ENCODE measurements at regions of chr2 and their contacts with region 1.

Region 1: DNA sequence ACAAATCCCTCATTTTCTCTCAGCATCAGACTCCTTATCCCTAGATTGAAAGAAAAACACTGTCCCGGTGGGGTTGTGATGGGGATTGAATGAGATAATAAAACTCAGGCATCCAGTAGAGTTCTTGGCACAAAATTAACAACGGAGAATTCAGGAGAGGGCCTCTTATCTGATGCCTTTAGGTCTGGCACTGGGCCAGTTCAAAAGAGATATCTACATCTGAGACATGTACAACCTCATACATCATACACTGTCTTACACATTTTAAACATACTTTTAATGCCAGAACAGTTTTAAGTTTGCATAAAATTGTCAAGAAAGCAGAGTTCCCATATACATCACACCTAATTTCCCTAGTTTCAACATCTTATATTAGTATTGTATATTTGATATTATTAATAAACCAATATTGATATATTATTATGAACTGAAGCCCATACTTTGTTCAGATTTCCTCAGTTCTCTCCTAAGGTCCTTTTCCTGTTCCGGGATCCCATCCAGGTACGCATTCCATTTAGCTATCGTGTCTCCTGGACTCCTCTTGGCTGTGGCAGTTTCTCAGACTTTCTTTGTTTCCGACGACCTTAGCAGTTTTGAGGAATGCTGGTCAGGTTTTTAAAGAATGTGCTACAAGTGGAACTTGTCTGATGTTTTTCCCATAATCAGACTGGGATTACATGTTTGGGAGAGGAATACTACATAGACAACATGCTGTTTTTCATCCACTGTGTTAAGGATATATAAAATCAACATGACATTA is 27.8 kb downstream of the NXPH2 start:
- DNase-seq: no peak
- ATAC-seq: no peak
- H3K4me3 ChIP-seq: no peak overlapping the region
- H3K27ac ChIP-seq: no peak overlapping the region
- H3K4me1 ChIP-seq: no peaks in the 10 kb centered on the region
- H3K27me3 ChIP-seq: no peaks in the 10 kb centered on the region
- CTCF ChIP-seq: no peak

Region 2: GRCh38 chr2:138390316-138390945 is 361.9 kb before region 1 on chr2:
- intact Hi-C with region 1: no loop called
- DNase-seq: no peak
- ATAC-seq: no peak
- H3K4me3 ChIP-seq: no peak overlapping the region
- H3K27ac ChIP-seq: no peak overlapping the region
- H3K4me1 ChIP-seq: no peaks in the 10 kb centered on the region
- H3K27me3 ChIP-seq: no peaks in the 10 kb centered on the region
- CTCF ChIP-seq: no peak

Region 3: GRCh38 chr2:138718405-138718804 is 34.0 kb before region 1 on chr2:
- intact Hi-C with region 1: loop called in 1 of 10 experiments (anchors 2 kb)
- DNase-seq: no peak
- ATAC-seq: no peak
- H3K4me3 ChIP-seq: no peak overlapping the region
- H3K27ac ChIP-seq: no peak overlapping the region
- H3K4me1 ChIP-seq: no peaks in the 10 kb centered on the region
- H3K27me3 ChIP-seq: no peaks in the 10 kb centered on the region
- CTCF ChIP-seq: no peak